ENCODE measurements at regions of chr2 and their contacts with region 1.

Region 1: GRCh38 chr2:175167792-175168563 is at the start of gene ATF2:
- DNase-seq: peak; percentile 100
- H3K4me3 Mint-ChIP-seq: peak within 1 kb of the TSS; percentile 100
- H3K27ac Mint-ChIP-seq: peak within 1 kb of the TSS; percentile 99
- H3K4me1 Mint-ChIP-seq: peaks cover 7% of the 10 kb centered on the region
- H3K27me3 Mint-ChIP-seq: no peaks in the 10 kb centered on the region
- CTCF ChIP-seq: no peak
- total RNA-seq, gene ATF2: 58.5 and 63.9 TPM in 2 replicates

Region 2: DNA sequence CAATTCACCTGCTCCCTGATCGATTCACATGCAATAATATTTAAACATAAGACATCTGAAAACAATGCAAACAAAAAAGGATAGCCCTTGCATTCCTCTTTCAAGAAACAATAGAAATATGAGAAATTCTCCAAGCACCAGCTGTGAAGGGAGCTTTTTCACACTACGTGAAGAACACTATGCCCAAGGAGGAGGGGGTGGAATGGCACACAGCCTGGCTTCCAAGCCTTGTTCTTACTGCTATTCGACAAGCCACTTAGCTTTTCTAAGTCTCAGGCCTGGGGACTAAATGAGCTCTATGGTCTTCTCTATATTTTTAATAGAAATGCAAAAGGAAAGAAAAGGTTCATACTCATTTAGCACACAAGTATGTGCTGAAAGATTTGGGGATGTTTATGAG is 311.5 kb before region 1 on chr2:
- CTCF ChIA-PET with region 1: no interaction called
- POLR2A ChIA-PET with region 1: no interaction called
- intact Hi-C with region 1: no loop called
- DNase-seq: no peak
- H3K4me3 Mint-ChIP-seq: no peak overlapping the region
- H3K27ac Mint-ChIP-seq: no peak overlapping the region
- H3K4me1 Mint-ChIP-seq: no peaks in the 10 kb centered on the region
- H3K27me3 Mint-ChIP-seq: no peaks in the 10 kb centered on the region
- CTCF ChIP-seq: no peak

Region 3: GRCh38 chr2:175111200-175111657 is 56.7 kb before region 1 on chr2:
- CTCF ChIA-PET with region 1: no interaction called
- POLR2A ChIA-PET with region 1: interaction called, 7 read pairs
- intact Hi-C with region 1: loop called (anchors 2 kb)
- DNase-seq: peak; percentile 57
- H3K4me3 Mint-ChIP-seq: no peak overlapping the region
- H3K27ac Mint-ChIP-seq: no peak overlapping the region
- H3K4me1 Mint-ChIP-seq: no peaks in the 10 kb centered on the region
- H3K27me3 Mint-ChIP-seq: no peaks in the 10 kb centered on the region
- CTCF ChIP-seq: peak; percentile 58

Region 4: DNA sequence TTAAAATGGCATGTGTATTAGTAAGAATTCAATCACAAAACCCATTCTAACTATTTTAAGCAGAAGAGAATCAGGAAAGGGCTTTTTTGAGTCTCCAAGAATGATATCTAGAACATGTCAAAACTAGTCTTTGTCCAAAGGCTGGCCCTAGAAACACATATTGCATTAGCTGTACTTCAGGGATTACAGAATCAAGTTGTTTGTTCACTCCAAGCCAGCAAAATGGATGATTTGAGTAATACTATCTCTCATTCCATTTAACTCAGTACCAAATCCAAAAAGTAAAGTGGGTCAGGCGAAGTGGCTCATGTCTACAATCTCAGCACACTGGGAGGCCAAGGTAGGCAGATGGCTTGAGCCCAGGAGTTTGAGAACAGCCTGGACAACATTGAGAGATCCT is 41.3 kb before region 1 on chr2:
- CTCF ChIA-PET with region 1: interaction called, 3 read pairs
- POLR2A ChIA-PET with region 1: interaction called, 16 read pairs
- intact Hi-C with region 1: no loop called
- DNase-seq: peak; percentile 32
- H3K4me3 Mint-ChIP-seq: no peak overlapping the region
- H3K27ac Mint-ChIP-seq: peak overlapping the region; percentile 43
- H3K4me1 Mint-ChIP-seq: peaks cover 13% of the 10 kb centered on the region
- H3K27me3 Mint-ChIP-seq: no peaks in the 10 kb centered on the region
- CTCF ChIP-seq: no peak

Region 5: GRCh38 chr2:175154661-175155082 is 13.3 kb before region 1 on chr2:
- CTCF ChIA-PET with region 1: interaction called, 3 read pairs
- POLR2A ChIA-PET with region 1: interaction called, 13 read pairs
- intact Hi-C with region 1: loop called (anchors 1 kb)
- DNase-seq: peak; percentile 44
- H3K4me3 Mint-ChIP-seq: no peak overlapping the region
- H3K27ac Mint-ChIP-seq: peak overlapping the region; percentile 8
- H3K4me1 Mint-ChIP-seq: peaks cover 16% of the 10 kb centered on the region
- H3K27me3 Mint-ChIP-seq: no peaks in the 10 kb centered on the region
- CTCF ChIP-seq: no peak

Region 6: GRCh38 chr2:175181104-175181876 is 13.3 kb after region 1 on chr2 and contains the start of gene ATP5MC3:
- CTCF ChIA-PET with region 1: interaction called, 3 read pairs
- POLR2A ChIA-PET with region 1: interaction called, 99 read pairs
- intact Hi-C with region 1: no loop called
- DNase-seq: peak; percentile 97
- H3K4me3 Mint-ChIP-seq: peak within 1 kb of the TSS; percentile 93
- H3K27ac Mint-ChIP-seq: peak within 1 kb of the TSS; percentile 96
- H3K4me1 Mint-ChIP-seq: peaks cover 19% of the 10 kb centered on the region
- H3K27me3 Mint-ChIP-seq: no peaks in the 10 kb centered on the region
- CTCF ChIP-seq: peak; percentile 18
- total RNA-seq, gene ATP5MC3: 256 and 277 TPM in 2 replicates

Region 7: DNA sequence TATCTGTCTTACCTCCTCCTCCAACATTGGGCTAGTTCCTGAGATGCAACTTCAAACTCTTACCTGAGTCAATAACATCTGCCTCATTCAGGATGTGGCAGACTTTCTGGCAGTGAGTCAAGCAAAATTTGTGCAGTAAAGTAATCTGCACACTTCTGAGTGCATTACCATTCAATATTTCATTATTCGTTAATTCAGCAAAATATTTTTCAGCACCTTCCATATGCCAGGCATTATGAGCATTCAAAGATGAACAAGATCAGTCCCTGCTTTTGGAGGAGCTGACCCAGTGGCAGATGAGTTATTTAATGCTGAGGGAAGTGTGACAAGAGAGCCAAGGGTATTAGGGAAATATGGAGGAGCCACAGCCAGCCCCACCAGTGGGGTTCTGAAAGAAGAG is 494.4 kb after region 1 on chr2:
- CTCF ChIA-PET with region 1: no interaction called
- POLR2A ChIA-PET with region 1: no interaction called
- intact Hi-C with region 1: no loop called
- DNase-seq: no peak
- H3K4me3 Mint-ChIP-seq: no peak overlapping the region
- H3K27ac Mint-ChIP-seq: no peak overlapping the region
- H3K4me1 Mint-ChIP-seq: no peaks in the 10 kb centered on the region
- H3K27me3 Mint-ChIP-seq: peaks cover 66% of the 10 kb centered on the region
- CTCF ChIP-seq: no peak

Measured in MCF 10A (cell line).